GM12878 (cell line): ENCODE measurements at regions of chr1 and their contacts with region 1.

Region 1: DNA sequence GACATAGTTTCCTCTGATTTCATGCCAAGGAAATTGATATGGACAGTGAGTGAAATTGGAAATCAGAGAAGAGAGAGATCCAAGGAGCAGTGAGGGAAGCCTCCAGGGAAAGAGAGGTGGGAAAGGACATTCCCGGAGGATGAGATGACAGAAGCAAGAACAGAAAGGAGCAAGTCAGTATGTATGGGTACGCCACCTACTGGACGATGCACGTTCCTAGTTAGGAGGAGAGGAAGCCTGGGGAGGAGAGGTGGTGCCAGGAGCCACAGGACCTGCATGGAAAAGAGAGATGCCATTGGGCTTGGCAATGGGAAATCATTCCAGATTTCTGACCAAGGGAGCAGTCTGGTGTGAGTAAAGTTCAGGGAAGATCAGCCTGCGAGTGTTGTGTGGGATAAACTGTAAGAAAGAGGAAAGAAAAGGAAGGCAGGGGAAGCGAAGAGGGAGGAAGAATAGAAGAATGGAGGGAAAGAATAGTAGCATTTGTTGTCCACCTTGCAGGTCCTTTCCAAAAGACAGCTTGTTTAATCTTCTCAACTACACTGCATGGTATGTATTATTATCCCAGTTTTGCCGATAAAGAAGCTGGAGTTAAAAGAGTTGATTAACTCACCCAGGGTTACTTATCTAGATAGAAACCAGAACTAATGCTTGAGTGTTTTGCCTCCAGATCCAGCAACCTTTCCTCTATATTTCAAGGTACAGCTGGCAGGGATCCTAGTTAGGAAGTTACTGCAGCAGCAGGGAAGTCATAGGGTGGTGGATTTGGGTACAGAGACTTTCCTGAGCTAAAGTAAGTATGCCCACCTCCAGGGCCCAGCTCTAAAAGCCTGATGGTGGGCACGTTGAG is 27.4 kb downstream of the C1orf116 start:
- DNase-seq: peak; percentile 7
- ATAC-seq: peak; percentile 96
- H3K4me3 ChIP-seq: no peak overlapping the region
- H3K27ac ChIP-seq: no peak overlapping the region
- H3K4me1 ChIP-seq: no peaks in the 10 kb centered on the region
- H3K27me3 ChIP-seq: peaks cover 2 to 3% of the 10 kb centered on the region in 2 experiments
- CTCF ChIP-seq: peak; percentile 78 to 90 (median 85)
- EP300 ChIP-seq: no peak
- POLR2A ChIP-seq: no peak
- RAD21 ChIP-seq: peak; percentile 41; the same call in 1 of the 2 replicates

Region 2: GRCh38 chr1:207015791-207016190 is 10.6 kb after region 1 on chr1:
- CTCF ChIA-PET with region 1: interaction called, 35 read pairs
- POLR2A ChIA-PET with region 1: no interaction called
- RAD21 ChIA-PET with region 1: no interaction called
- SMC1A ChIA-PET with region 1: interaction called, 4 read pairs
- in situ Hi-C with region 1: no loop called
- intact Hi-C with region 1: no loop called
- DNase-seq: no peak
- ATAC-seq: no peak; the same call in 2 of the 3 replicates
- H3K4me3 ChIP-seq: no peak overlapping the region
- H3K27ac ChIP-seq: no peak overlapping the region
- H3K4me1 ChIP-seq: no peaks in the 10 kb centered on the region
- H3K27me3 ChIP-seq: peaks cover 0 to 2% of the 10 kb centered on the region in 2 experiments; a peak in 2 of 4 replicates
- CTCF ChIP-seq: no peak
- EP300 ChIP-seq: no peak
- POLR2A ChIP-seq: no peak
- RAD21 ChIP-seq: no peak

Region 3: DNA sequence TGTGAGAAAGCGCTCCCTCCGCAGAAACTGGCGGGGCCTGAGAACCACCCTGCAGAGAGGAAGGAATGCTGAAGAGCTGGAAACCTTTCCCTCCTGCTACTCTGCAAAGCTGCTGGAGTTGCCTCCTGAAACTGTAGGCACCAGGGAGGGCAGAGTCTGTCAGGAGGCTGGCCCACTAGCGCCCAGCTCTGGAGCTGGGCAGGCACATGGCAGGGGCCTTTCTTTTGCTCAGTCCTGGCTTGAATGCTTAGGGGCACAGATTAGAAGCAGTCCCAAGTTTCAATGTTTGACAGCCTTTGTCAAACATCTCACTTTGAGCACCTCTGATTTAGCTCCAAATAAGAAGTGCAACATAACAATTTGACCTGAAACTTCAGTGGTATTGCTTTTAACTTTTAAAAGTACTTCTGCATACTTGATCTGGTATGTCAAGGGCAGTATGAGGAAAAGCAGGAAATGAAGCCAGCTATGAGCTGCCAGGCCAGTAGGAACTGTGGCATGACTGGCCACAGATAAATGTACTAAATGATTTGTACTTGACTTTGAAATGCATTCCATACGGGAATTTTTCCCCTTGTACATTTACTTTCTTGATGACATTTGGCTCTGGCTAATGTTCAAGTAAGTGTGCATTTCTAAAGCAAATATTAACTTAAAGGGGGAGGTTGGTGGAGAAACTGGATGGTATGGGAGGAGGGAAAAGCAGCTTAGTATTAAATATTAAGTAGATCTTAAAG is 20.1 kb after region 1 on chr1:
- CTCF ChIA-PET with region 1: interaction called, 19 read pairs
- POLR2A ChIA-PET with region 1: no interaction called
- RAD21 ChIA-PET with region 1: no interaction called
- SMC1A ChIA-PET with region 1: no interaction called
- in situ Hi-C with region 1: no loop called
- intact Hi-C with region 1: no loop called
- DNase-seq: no peak
- ATAC-seq: no peak
- H3K4me3 ChIP-seq: no peak overlapping the region
- H3K27ac ChIP-seq: no peak overlapping the region
- H3K4me1 ChIP-seq: no peaks in the 10 kb centered on the region
- H3K27me3 ChIP-seq: peaks cover 0 to 10% of the 10 kb centered on the region in 2 experiments
- CTCF ChIP-seq: no peak
- EP300 ChIP-seq: no peak
- POLR2A ChIP-seq: no peak
- RAD21 ChIP-seq: no peak

Region 4: DNA sequence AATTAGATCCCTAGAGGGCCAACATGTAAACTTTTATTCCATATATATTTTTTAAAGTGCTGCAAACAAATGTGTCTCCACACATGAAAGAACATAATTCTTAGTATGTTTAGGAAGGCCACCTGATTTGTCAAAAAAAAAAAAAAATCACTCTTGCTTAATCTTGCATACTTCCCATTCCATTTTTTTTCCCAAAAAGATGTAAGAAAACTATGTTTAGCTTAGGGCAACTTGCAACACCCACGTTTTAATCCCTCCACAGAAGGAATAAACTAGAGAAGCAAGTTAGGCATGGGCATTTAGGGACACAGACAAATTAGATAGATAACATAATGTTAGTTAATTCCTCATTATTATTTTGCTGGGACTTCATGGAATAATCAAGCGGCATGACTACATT is 40.3 kb after region 1 on chr1:
- CTCF ChIA-PET with region 1: interaction called, 15 read pairs
- POLR2A ChIA-PET with region 1: no interaction called
- RAD21 ChIA-PET with region 1: no interaction called
- SMC1A ChIA-PET with region 1: no interaction called
- in situ Hi-C with region 1: no loop called
- intact Hi-C with region 1: no loop called
- DNase-seq: no peak
- ATAC-seq: no peak
- H3K4me3 ChIP-seq: no peak overlapping the region
- H3K27ac ChIP-seq: no peak overlapping the region
- H3K4me1 ChIP-seq: no peaks in the 10 kb centered on the region; the same call in 1 of the 2 replicates
- H3K27me3 ChIP-seq: no peaks in the 10 kb centered on the region
- CTCF ChIP-seq: no peak
- EP300 ChIP-seq: no peak
- POLR2A ChIP-seq: no peak
- RAD21 ChIP-seq: no peak